GM12878 (cell line): ENCODE measurements at regions of chr13 and their contacts with region 1.

Region 1: DNA sequence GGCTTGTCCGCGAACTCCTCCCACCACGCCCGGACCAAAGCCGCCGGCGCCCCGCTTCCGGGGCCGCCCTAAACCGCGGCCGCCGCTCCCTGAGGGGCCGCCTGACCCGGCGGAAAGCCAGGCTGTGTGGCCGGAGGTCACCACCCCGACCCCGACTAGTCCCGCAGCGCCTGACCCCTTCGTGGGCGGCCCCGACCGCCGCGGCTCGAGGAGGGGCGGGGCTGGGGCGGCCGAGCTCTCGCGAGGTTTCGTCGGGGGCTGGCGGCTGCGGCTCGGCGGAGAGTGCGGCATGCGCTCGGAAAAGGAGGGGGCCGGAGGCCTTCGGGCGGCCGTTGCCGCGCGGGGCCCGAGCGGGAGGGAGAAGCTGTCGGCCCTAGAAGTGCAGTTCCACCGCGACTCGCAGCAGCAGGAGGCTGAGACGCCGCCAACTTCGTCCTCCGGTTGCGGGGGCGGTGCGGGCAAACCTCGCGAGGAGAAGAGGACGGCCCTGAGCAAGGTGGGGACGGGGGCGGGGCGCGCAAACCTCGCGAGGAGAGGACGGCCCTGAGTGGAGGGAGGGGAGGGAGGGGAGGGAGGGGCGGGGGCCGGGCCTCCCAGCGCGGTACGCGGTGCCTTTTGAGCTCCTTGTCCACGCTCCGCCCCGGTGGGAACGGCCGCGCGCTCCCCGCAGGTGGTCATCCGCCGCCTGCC is at the start of gene UPF3A:
- DNase-seq: peak; percentile 62
- ATAC-seq: peak; percentile 84
- H3K4me3 ChIP-seq: peak within 1 kb of the TSS; percentile 88
- H3K27ac ChIP-seq: peak within 1 kb of the TSS; percentile 97
- H3K4me1 ChIP-seq: peaks cover 6% of the 10 kb centered on the region
- H3K27me3 ChIP-seq: no peaks in the 10 kb centered on the region
- CTCF ChIP-seq: no peak
- EP300 ChIP-seq: 0 out of 4 replicates have a peak, but pooled peaks of 1 of the 2 experiments have one; percentile 17
- POLR2A ChIP-seq: peak; percentile 97
- RAD21 ChIP-seq: no peak
- polyA plus RNA-seq, gene UPF3A: 18.6 to 34.4 TPM

Region 2: GRCh38 chr13:114035583-114036531 is 245.6 kb before region 1 on chr13:
- CTCF ChIA-PET with region 1: no interaction called
- POLR2A ChIA-PET with region 1: no interaction called
- RAD21 ChIA-PET with region 1: no interaction called
- SMC1A ChIA-PET with region 1: no interaction called
- in situ Hi-C with region 1: no loop called
- intact Hi-C with region 1: no loop called
- DNase-seq: no peak
- ATAC-seq: no peak
- H3K4me3 ChIP-seq: no peak overlapping the region
- H3K27ac ChIP-seq: no peak overlapping the region
- H3K4me1 ChIP-seq: no peaks in the 10 kb centered on the region
- H3K27me3 ChIP-seq: no peaks in the 10 kb centered on the region
- CTCF ChIP-seq: no peak
- EP300 ChIP-seq: no peak
- POLR2A ChIP-seq: no peak
- RAD21 ChIP-seq: no peak

Region 3: GRCh38 chr13:114234645-114235421 is 46.7 kb before region 1 on chr13 and contains the start of gene CDC16:
- CTCF ChIA-PET with region 1: interaction called, 4 read pairs
- POLR2A ChIA-PET with region 1: interaction called, 4 read pairs
- RAD21 ChIA-PET with region 1: interaction called, 4 read pairs
- SMC1A ChIA-PET with region 1: interaction called, 7 read pairs
- in situ Hi-C with region 1: no loop called
- intact Hi-C with region 1: loop called (anchors 2 kb)
- DNase-seq: peak; percentile 57
- ATAC-seq: peak; percentile 96
- H3K4me3 ChIP-seq: peak within 1 kb of the TSS; percentile 97
- H3K27ac ChIP-seq: peak within 1 kb of the TSS; percentile 81
- H3K4me1 ChIP-seq: no peaks in the 10 kb centered on the region
- H3K27me3 ChIP-seq: 0 out of 4 replicates have a peak, but pooled peaks cover 0 to 6% of the 10 kb centered on the region in 2 experiments
- CTCF ChIP-seq: peak in 1 of 3 experiments; percentile 8; a peak in 1 of 6 replicates
- EP300 ChIP-seq: no peak
- POLR2A ChIP-seq: peak; percentile 86
- RAD21 ChIP-seq: no peak
- polyA plus RNA-seq, gene CDC16: 15.4 to 29.6 TPM

Region 4: DNA sequence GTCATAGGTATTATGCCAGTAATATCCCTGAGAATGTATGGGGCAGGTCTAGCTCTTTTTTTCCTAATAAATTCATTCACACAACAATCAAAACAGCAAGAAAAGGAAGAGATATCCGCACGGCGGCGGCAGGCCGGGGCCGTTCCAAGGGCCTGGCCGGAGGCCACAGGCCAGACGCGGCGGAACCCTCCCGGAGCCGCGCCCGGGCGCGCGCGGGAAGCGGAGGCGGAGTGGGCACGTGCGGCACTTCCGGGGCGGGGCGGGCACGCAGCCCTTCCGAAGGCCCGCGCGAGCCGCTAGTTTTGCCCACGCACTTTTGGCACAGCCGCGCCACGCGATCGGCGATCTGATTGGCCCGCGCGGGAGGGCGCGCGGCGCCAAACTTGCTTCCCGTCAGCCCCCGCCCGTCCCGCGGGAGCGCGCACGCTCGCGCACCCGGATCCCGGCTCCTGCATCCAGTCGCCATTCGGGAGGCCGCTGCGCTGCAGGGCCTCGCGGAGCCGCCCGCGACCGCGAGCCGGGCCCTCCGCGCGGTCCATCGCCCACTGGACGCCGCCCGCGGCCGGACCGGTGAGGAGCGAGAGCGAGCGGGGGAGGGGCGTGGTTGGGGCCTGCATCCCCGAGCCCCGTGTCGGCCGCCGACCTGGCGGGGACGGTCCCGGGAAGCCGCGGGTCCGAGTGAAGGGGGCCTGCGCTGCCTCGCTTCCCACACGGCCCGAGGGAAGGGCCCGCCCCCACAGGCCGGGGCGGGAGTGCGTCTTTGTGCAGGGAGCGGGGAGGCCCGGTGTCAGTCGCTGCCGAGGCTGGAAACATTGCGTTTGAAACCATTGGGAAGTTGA is 32.8 kb after region 1 on chr13 and contains the start of gene CHAMP1:
- CTCF ChIA-PET with region 1: interaction called, 9 read pairs
- POLR2A ChIA-PET with region 1: interaction called, 39 read pairs
- RAD21 ChIA-PET with region 1: interaction called, 24 read pairs
- SMC1A ChIA-PET with region 1: interaction called, 27 read pairs
- in situ Hi-C with region 1: no loop called
- intact Hi-C with region 1: loop called (anchors 1 kb)
- DNase-seq: peak; percentile 73
- ATAC-seq: peak; percentile 83
- H3K4me3 ChIP-seq: peak within 1 kb of the TSS; percentile 78
- H3K27ac ChIP-seq: peak within 1 kb of the TSS; percentile 73
- H3K4me1 ChIP-seq: peaks cover 5% of the 10 kb centered on the region; the same call in 1 of the 2 replicates
- H3K27me3 ChIP-seq: no peaks in the 10 kb centered on the region
- CTCF ChIP-seq: peak in 1 of 3 experiments; percentile 12; a peak in 1 of 6 replicates
- EP300 ChIP-seq: peak; percentile 14 to 41; a peak in 1 of 4 replicates
- POLR2A ChIP-seq: peak; percentile 91
- RAD21 ChIP-seq: no peak
- polyA plus RNA-seq, gene CHAMP1: 1.1 to 2.8 TPM

Region 5: DNA sequence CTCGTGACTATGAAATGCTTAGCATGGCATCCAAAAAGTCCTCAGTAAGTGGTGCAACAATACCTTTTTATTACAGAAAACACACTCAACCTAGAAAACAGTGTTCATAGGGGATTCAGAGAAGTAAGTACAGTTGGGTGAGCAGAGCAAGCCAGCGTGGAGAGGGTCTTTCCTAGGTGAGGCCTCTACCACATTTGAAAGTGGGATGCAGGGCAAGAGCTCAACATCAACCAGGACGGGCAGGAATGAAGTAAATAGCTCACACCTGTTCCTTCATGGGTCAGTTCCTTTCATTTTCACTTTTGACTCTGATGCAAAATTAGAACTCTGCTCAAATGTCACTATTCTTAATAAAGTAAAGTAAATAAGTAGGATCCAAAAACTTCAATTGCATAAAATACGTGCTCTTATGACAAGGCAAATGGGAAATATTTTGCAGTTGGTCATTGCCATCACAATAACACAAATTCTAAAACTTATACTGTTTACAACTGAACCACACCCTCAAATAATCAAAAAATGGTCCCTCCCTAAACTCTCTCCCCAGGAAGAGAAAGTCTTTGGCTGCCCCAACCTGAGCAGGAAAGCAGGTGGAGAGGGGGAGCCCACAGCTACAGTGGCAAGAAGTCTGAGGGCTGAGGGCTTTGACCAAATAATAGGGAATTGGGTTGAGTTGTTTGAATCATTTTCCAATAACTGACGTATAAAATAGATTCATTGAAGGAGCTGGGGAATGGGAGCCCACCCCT is 53.0 kb after region 1 on chr13:
- CTCF ChIA-PET with region 1: interaction called, 13 read pairs
- POLR2A ChIA-PET with region 1: interaction called, 3 read pairs
- RAD21 ChIA-PET with region 1: interaction called, 7 read pairs
- SMC1A ChIA-PET with region 1: interaction called, 4 read pairs
- in situ Hi-C with region 1: no loop called
- intact Hi-C with region 1: no loop called
- DNase-seq: no peak
- ATAC-seq: peak; percentile 81
- H3K4me3 ChIP-seq: no peak overlapping the region; the same call in 1 of the 2 replicates
- H3K27ac ChIP-seq: peak overlapping the region; percentile 49
- H3K4me1 ChIP-seq: peaks cover 10% of the 10 kb centered on the region
- H3K27me3 ChIP-seq: no peaks in the 10 kb centered on the region
- CTCF ChIP-seq: no peak
- EP300 ChIP-seq: no peak
- POLR2A ChIP-seq: no peak
- RAD21 ChIP-seq: no peak

Region 6: GRCh38 chr13:114339857-114340534 is 58.5 kb after region 1 on chr13:
- CTCF ChIA-PET with region 1: interaction called, 13 read pairs
- POLR2A ChIA-PET with region 1: interaction called, 4 read pairs
- RAD21 ChIA-PET with region 1: interaction called, 7 read pairs
- SMC1A ChIA-PET with region 1: interaction called, 11 read pairs
- in situ Hi-C with region 1: no loop called
- intact Hi-C with region 1: no loop called
- DNase-seq: no peak
- ATAC-seq: peak; percentile 88
- H3K4me3 ChIP-seq: no peak overlapping the region
- H3K27ac ChIP-seq: no peak overlapping the region
- H3K4me1 ChIP-seq: peaks cover 11% of the 10 kb centered on the region
- H3K27me3 ChIP-seq: no peaks in the 10 kb centered on the region
- CTCF ChIP-seq: peak; percentile 59 to 83 (median 70)
- EP300 ChIP-seq: no peak
- POLR2A ChIP-seq: no peak
- RAD21 ChIP-seq: peak; percentile 79